Mammary epithelial cell (primary cell): ENCODE measurements at regions of chr11 and their contacts with region 1.

Region 1: GRCh38 chr11:9170450-9170849 is 79.1 kb upstream of the SCUBE2 start:
- DNase-seq: no peak
- H3K4me3 ChIP-seq: no peak overlapping the region
- H3K27ac ChIP-seq: no peak overlapping the region
- H3K4me1 ChIP-seq: peaks cover 7% of the 10 kb centered on the region
- H3K27me3 ChIP-seq: no peaks in the 10 kb centered on the region
- CTCF ChIP-seq: no peak

Region 2: GRCh38 chr11:9130297-9130696 is 40.2 kb before region 1 on chr11:
- CTCF ChIA-PET with region 1: no interaction called
- dilution Hi-C with region 1: no loop called
- in situ Hi-C with region 1: no loop called
- intact Hi-C with region 1: no loop called
- DNase-seq: no peak
- H3K4me3 ChIP-seq: no peak overlapping the region
- H3K27ac ChIP-seq: no peak overlapping the region
- H3K4me1 ChIP-seq: no peaks in the 10 kb centered on the region
- H3K27me3 ChIP-seq: no peaks in the 10 kb centered on the region
- CTCF ChIP-seq: no peak

Region 3: GRCh38 chr11:9264316-9265210 is 94.1 kb after region 1 on chr11:
- CTCF ChIA-PET with region 1: no interaction called
- dilution Hi-C with region 1: no loop called
- in situ Hi-C with region 1: no loop called
- intact Hi-C with region 1: loop called (anchors 5 kb)
- DNase-seq: peak; percentile 70
- H3K4me3 ChIP-seq: peak overlapping the region; percentile 68 to 87 (median 84)
- H3K27ac ChIP-seq: peak overlapping the region; percentile 33
- H3K4me1 ChIP-seq: peaks cover 4% of the 10 kb centered on the region
- H3K27me3 ChIP-seq: no peaks in the 10 kb centered on the region
- CTCF ChIP-seq: no peak